ENCODE measurements at regions of chr19 and their contacts with region 1.

Region 1: DNA sequence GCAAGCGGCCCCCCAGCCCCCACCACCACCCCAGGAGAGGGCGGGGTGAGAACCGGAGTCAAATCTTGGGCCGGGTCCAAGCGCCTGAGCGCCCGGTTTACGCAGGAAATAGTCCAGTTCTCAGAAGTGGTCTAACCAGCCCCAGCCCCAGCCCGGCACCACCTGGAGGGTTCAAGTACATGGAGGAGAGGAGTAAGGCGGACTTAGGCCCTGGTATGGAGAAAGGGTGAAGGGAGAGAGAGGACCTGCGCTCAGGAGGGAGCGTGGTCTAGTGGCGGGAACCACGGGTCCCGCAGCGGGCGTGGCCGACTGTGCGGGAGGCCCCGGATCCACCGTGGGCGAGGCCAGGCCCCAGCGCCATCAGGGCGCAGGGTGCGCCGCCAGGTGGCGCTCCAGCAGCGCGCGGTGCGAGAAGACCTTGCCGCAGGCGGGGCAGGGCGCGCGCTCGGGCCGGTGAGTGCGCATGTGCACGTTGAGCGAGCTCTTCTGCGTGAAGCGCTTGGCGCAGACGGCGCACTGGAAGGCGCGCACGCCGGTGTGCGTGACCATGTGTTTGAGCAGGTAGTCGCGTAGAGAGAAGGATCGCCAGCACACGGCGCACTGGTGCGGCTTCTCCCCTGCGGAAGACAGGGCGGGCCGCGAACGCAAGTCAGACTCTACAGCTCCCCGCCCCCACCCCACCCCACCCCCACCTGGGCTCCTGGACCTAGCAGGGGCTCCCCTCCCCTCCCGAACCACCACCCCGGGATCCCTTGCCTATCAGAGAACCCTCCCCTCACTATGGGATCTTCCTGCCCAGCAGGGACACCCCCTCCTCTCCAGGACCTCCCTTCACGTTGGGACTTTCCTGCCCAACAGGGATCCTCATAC is 2.1 kb upstream of the SLC27A5 start:
- DNase-seq: peak; percentile 86 to 97 (median 94)
- ATAC-seq: peak; percentile 94
- H3K4me3 ChIP-seq: peak overlapping the region; percentile 10 to 32
- H3K4me3 Mint-ChIP-seq: peak overlapping the region; percentile 78
- H3K27ac ChIP-seq: peak overlapping the region; percentile 21 to 71
- H3K27ac Mint-ChIP-seq: peak overlapping the region; percentile 78
- H3K4me1 ChIP-seq: peaks cover 25% of the 10 kb centered on the region
- H3K4me1 Mint-ChIP-seq: peaks cover 35% of the 10 kb centered on the region
- H3K27me3 ChIP-seq: no peaks in the 10 kb centered on the region
- H3K27me3 Mint-ChIP-seq: no peaks in the 10 kb centered on the region
- CTCF ChIP-seq: peak; percentile 85

Region 2: GRCh38 chr19:58228585-58229254 is 285.2 kb before region 1 on chr19 and contains the start of gene ZNF544:
- CTCF ChIA-PET with region 1: no interaction called
- POLR2A ChIA-PET with region 1: no interaction called
- intact Hi-C with region 1: no loop called
- DNase-seq: peak in 8 of 9 experiments; percentile 35 to 78 (median 54)
- ATAC-seq: peak; percentile 71
- H3K4me3 ChIP-seq: peak within 1 kb of the TSS; percentile 72 to 93
- H3K4me3 Mint-ChIP-seq: peak within 1 kb of the TSS; percentile 93
- H3K27ac ChIP-seq: peak within 1 kb of the TSS; percentile 37 to 79
- H3K27ac Mint-ChIP-seq: peak within 1 kb of the TSS; percentile 85
- H3K4me1 ChIP-seq: peaks cover 13% of the 10 kb centered on the region
- H3K4me1 Mint-ChIP-seq: peaks cover 34% of the 10 kb centered on the region
- H3K27me3 ChIP-seq: no peaks in the 10 kb centered on the region
- H3K27me3 Mint-ChIP-seq: no peaks in the 10 kb centered on the region
- CTCF ChIP-seq: no peak
- total RNA-seq, gene ZNF544: 9.5 to 12.5 TPM

Region 3: DNA sequence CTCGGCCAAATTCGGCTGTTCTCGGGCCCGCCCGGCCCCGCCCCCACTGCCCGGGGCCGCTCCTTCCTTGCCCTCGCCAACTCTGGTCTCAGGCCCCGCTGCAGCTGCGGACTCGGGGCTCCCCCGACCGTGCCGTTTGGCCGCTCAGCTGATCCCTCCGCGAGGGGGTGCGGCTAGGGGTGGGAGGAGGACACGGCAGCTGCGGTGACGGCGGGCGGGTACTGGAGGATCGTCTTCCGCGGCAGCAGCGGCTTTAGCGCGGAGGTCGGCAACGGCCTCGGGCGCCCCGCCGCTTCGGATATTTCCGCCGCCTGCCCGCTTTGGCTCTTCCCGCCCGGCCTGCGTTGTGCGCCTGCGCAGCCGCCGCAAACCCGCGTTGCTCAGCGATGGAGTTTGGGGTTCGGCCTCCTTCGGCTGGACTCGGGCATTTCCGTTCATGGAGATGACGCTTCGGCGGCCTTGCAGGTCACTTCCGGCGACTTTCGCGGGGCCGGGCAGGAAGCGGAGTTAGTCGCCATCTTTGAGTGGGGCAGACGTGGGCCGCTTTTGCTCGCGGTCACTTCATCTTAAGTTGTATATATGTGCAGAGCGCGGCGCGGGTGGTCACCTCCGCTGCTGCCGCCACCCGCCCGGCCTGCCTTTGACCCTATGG is 44.8 kb after region 1 on chr19:
- CTCF ChIA-PET with region 1: interaction called, 15 read pairs
- POLR2A ChIA-PET with region 1: interaction called, 18 read pairs
- intact Hi-C with region 1: loop called (anchors 1 kb)
- DNase-seq: peak; percentile 99 to 100 (median 100)
- ATAC-seq: peak; percentile 69
- H3K4me3 ChIP-seq: peak overlapping the region; percentile 61 to 96
- H3K4me3 Mint-ChIP-seq: peak overlapping the region; percentile 97
- H3K27ac ChIP-seq: peak overlapping the region; percentile 88 to 91
- H3K27ac Mint-ChIP-seq: peak overlapping the region; percentile 98
- H3K4me1 ChIP-seq: peaks cover 60% of the 10 kb centered on the region
- H3K4me1 Mint-ChIP-seq: peaks cover 72% of the 10 kb centered on the region
- H3K27me3 ChIP-seq: no peaks in the 10 kb centered on the region
- H3K27me3 Mint-ChIP-seq: no peaks in the 10 kb centered on the region
- CTCF ChIP-seq: no peak

Region 4: GRCh38 chr19:58572818-58573657 is 59.1 kb after region 1 on chr19 and contains the start of gene MZF1:
- CTCF ChIA-PET with region 1: interaction called, 24 read pairs
- POLR2A ChIA-PET with region 1: interaction called, 11 read pairs
- intact Hi-C with region 1: loop called in 1 of 2 experiments (anchors 2 kb)
- DNase-seq: peak; percentile 99 to 100 (median 99)
- ATAC-seq: peak; percentile 70
- H3K4me3 ChIP-seq: peak within 1 kb of the TSS; percentile 83 to 84
- H3K4me3 Mint-ChIP-seq: peak within 1 kb of the TSS; percentile 98
- H3K27ac ChIP-seq: peak within 1 kb of the TSS; percentile 98 to 100
- H3K27ac Mint-ChIP-seq: peak within 1 kb of the TSS; percentile 99
- H3K4me1 ChIP-seq: peaks cover 22% of the 10 kb centered on the region
- H3K4me1 Mint-ChIP-seq: peaks cover 30% of the 10 kb centered on the region
- H3K27me3 ChIP-seq: no peaks in the 10 kb centered on the region
- H3K27me3 Mint-ChIP-seq: no peaks in the 10 kb centered on the region
- CTCF ChIP-seq: no peak
- total RNA-seq, gene MZF1: 14.1 to 15.0 TPM

Region 5: GRCh38 chr19:58581227-58582151 is 67.6 kb after region 1 on chr19:
- CTCF ChIA-PET with region 1: interaction called, 72 read pairs
- POLR2A ChIA-PET with region 1: interaction called, 8 read pairs
- intact Hi-C with region 1: loop called (anchors 1 kb)
- DNase-seq: peak; percentile 81 to 93 (median 91)
- ATAC-seq: peak; percentile 100
- H3K4me3 ChIP-seq: no peak overlapping the region
- H3K4me3 Mint-ChIP-seq: no peak overlapping the region
- H3K27ac ChIP-seq: peak overlapping the region in 1 of 2 experiments; percentile 56
- H3K27ac Mint-ChIP-seq: peak overlapping the region; percentile 82
- H3K4me1 ChIP-seq: peaks cover 6% of the 10 kb centered on the region
- H3K4me1 Mint-ChIP-seq: peaks cover 11% of the 10 kb centered on the region
- H3K27me3 ChIP-seq: no peaks in the 10 kb centered on the region
- H3K27me3 Mint-ChIP-seq: no peaks in the 10 kb centered on the region
- CTCF ChIP-seq: peak; percentile 88

Measured in CD8-positive, alpha-beta T cell (primary cell).